ENCODE measurements at regions of chr22 and their contacts with region 1.

Region 1: GRCh38 chr22:50525390-50526068 is at the start of gene SCO2:
- DNase-seq: peak; percentile 98
- ATAC-seq: peak; percentile 62
- H3K4me3 Mint-ChIP-seq: peak within 1 kb of the TSS; percentile 97
- H3K27ac Mint-ChIP-seq: peak within 1 kb of the TSS; percentile 95
- H3K4me1 Mint-ChIP-seq: peaks cover 45% of the 10 kb centered on the region
- H3K27me3 Mint-ChIP-seq: no peaks in the 10 kb centered on the region
- total RNA-seq, gene SCO2: 11.7 to 13.9 TPM

Region 2: DNA sequence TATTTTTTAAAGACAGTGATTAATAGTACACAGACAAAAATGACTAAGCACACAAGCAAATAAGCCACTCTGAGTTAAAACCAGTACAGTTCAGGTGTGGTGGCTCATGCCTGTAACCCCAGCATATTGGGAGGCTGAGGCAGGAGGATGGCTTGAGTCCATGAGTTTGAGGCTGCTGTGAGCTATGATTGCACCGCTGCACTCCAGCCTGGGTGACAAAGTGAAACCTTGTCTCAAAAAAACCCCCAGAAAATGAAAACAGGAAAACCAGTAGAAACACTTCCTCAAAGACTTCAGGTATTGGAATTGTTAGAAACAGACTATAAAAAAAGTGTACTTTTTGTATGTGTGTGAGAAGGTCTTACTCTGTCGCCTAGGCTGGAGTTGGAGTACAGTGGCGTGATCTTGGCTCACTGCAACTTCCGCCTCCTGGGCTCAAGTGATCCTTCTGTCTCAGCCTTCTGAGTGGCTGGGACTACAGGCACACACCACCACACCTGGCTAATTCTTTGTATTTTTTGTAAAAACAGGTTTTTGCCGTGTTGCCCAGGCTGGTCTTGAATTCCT is 149.4 kb before region 1 on chr22:
- CTCF ChIA-PET with region 1: no interaction called
- POLR2A ChIA-PET with region 1: no interaction called
- DNase-seq: no peak
- ATAC-seq: no peak
- H3K4me3 Mint-ChIP-seq: no peak overlapping the region
- H3K27ac Mint-ChIP-seq: peak overlapping the region; percentile 77
- H3K4me1 Mint-ChIP-seq: peaks cover 22% of the 10 kb centered on the region
- H3K27me3 Mint-ChIP-seq: no peaks in the 10 kb centered on the region

Region 3: GRCh38 chr22:50444663-50445062 is 80.9 kb before region 1 on chr22:
- CTCF ChIA-PET with region 1: interaction called, 14 read pairs
- POLR2A ChIA-PET with region 1: interaction called, 10 read pairs
- DNase-seq: no peak
- ATAC-seq: no peak
- H3K4me3 Mint-ChIP-seq: no peak overlapping the region
- H3K27ac Mint-ChIP-seq: peak overlapping the region; percentile 89
- H3K4me1 Mint-ChIP-seq: peaks cover 25% of the 10 kb centered on the region
- H3K27me3 Mint-ChIP-seq: no peaks in the 10 kb centered on the region

Region 4: GRCh38 chr22:50469377-50470305 is 55.9 kb before region 1 on chr22:
- CTCF ChIA-PET with region 1: interaction called, 37 read pairs
- POLR2A ChIA-PET with region 1: interaction called, 11 read pairs
- DNase-seq: peak; percentile 99
- ATAC-seq: peak; percentile 75
- H3K4me3 Mint-ChIP-seq: peak overlapping the region; percentile 71
- H3K27ac Mint-ChIP-seq: peak overlapping the region; percentile 95
- H3K4me1 Mint-ChIP-seq: peaks cover 76% of the 10 kb centered on the region
- H3K27me3 Mint-ChIP-seq: no peaks in the 10 kb centered on the region

Region 5: GRCh38 chr22:50490531-50491308 is 34.8 kb before region 1 on chr22:
- CTCF ChIA-PET with region 1: no interaction called
- POLR2A ChIA-PET with region 1: no interaction called
- DNase-seq: no peak
- ATAC-seq: peak; percentile 42
- H3K4me3 Mint-ChIP-seq: peak overlapping the region; percentile 25
- H3K27ac Mint-ChIP-seq: peak overlapping the region; percentile 34
- H3K4me1 Mint-ChIP-seq: peaks cover 8% of the 10 kb centered on the region
- H3K27me3 Mint-ChIP-seq: peaks cover 2% of the 10 kb centered on the region

Region 6: DNA sequence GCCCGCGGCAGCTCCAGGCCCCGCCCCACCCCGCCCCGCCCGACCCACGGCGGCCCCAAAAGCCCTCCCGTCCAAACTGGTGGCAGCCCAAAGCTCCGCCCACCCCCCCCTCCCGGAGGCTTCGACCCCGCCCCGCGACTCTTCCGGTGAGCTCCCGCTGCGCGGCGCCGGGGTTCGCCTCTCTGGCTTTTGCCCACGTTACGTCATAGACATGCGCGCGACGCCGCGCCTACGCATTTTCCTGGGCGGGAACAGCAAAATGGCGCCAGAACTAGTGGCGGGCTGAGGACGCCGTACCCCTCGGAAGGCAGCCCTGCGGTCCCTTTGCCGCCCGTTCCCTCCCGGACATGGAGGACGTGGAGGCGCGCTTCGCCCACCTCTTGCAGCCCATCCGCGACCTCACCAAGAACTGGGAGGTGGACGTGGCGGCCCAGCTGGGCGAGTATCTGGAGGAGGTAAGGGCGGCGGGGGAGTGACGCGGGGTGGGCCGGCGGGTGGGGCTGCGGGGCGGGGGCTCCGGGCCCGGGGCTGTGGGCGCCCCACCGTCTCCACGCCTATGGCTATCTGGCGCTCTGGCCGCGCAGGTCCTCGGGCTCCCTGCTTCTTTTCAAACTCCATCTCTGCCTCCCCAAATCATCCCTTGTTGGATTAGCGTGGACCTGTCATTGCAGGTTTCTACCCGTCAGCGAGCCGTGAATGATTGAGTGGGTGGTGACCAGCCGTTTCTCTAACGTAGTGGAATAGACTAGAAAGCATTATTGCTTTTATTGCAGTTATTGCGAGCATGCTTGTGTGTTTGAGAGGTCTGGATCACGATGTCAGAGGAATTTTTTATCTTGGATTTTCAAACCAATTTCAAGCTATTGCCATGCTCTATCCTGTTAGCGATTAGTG is 17.3 kb before region 1 on chr22 and contains the start of gene NCAPH2:
- CTCF ChIA-PET with region 1: interaction called, 55 read pairs
- POLR2A ChIA-PET with region 1: interaction called, 82 read pairs
- DNase-seq: peak; percentile 98
- ATAC-seq: peak; percentile 76
- H3K4me3 Mint-ChIP-seq: peak within 1 kb of the TSS; percentile 98
- H3K27ac Mint-ChIP-seq: peak within 1 kb of the TSS; percentile 94
- H3K4me1 Mint-ChIP-seq: peaks cover 25% of the 10 kb centered on the region
- H3K27me3 Mint-ChIP-seq: no peaks in the 10 kb centered on the region
- total RNA-seq, gene NCAPH2: 146 to 150 TPM

Region 7: DNA sequence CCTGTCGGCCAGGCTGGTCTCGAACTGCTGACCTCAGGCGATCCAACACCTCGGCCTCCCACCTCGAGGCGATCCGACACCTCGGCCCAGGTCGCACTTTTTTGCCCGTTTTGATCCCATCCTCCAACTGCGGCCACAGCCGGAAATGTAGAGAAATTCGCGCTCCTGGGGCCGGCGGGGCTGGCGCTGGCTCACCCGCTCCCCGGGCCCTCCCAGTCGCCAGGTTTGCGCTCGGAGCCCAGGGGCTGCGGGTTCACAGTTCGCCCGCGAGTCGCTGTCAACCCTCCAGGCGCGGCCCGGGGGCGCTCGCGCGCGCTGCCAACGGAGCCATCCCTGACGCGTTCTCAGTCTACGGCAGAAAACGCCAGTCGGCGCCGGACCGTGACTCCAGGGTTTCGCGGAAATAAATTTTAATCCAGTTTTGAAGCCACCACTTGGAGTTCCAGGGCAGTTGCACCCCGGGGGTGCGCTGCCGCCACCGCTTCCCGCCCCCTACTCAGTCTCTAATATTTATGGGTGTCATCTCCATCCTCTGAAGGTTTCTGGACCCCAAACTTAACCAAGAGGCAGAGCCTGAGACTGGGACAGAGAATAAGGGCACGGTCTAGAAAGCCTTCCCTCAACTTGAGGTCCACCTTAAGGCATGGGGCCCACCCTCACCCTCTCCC is 18.7 kb after region 1 on chr22:
- CTCF ChIA-PET with region 1: interaction called, 116 read pairs
- POLR2A ChIA-PET with region 1: interaction called, 335 read pairs
- DNase-seq: peak; percentile 91
- ATAC-seq: peak; percentile 60
- H3K4me3 Mint-ChIP-seq: peak overlapping the region; percentile 60
- H3K27ac Mint-ChIP-seq: peak overlapping the region; percentile 86
- H3K4me1 Mint-ChIP-seq: peaks cover 61% of the 10 kb centered on the region
- H3K27me3 Mint-ChIP-seq: no peaks in the 10 kb centered on the region

Region 8: GRCh38 chr22:50576070-50576469 is 50.5 kb after region 1 on chr22:
- CTCF ChIA-PET with region 1: interaction called, 10 read pairs
- POLR2A ChIA-PET with region 1: interaction called, 31 read pairs
- DNase-seq: no peak
- ATAC-seq: no peak
- H3K4me3 Mint-ChIP-seq: no peak overlapping the region
- H3K27ac Mint-ChIP-seq: peak overlapping the region; percentile 12
- H3K4me1 Mint-ChIP-seq: peaks cover 31% of the 10 kb centered on the region
- H3K27me3 Mint-ChIP-seq: no peaks in the 10 kb centered on the region

Region 9: DNA sequence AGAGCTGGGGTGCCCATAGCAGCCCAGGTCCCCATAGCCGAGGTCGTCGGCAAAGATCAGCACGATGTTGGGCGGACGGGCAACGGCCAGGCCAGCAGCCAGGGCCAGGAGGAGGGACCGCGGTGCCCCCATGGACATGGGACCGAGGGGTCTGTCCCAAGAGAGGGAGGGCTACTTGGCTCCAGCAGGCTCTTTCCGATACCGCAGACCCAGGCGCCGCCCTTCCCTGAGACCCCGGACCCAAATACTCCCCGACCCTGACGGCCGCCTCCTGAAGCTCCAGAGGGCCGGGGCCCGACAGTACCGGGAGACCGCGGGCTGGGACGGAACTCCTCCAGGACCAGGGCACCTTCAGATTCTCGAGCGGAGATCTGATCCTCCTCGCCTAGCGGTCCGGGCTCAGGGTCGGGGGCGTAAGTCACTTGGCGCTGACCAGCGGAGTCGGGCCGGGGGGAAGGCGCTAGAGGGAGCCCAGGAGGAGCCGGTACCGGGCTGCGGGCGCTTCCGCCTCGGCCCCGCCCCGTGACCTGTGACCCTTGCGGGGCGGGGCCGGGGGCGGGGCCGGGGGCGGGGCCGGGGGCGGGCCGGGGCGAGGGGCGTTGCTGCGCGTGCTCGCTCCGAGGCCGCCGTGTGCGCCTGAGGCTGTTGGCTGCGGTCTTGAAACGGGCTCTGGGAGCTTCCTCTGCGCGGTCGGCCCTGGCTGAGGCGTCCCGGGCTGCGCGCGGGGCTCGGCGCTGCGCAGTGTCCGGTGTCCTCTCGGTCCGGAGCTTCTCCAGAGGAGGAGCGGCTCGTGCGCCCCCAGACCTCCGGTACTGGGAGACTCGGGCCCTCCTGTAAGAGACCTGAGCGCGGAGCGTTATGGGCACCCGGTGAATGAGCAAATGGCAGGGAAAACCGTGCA is 102.4 kb after region 1 on chr22 and contains the start of gene ARSA:
- CTCF ChIA-PET with region 1: interaction called, 11 read pairs
- POLR2A ChIA-PET with region 1: interaction called, 111 read pairs
- DNase-seq: peak; percentile 86
- ATAC-seq: peak; percentile 97
- H3K4me3 Mint-ChIP-seq: peak within 1 kb of the TSS; percentile 79
- H3K27ac Mint-ChIP-seq: peak within 1 kb of the TSS; percentile 81
- H3K4me1 Mint-ChIP-seq: peaks cover 25% of the 10 kb centered on the region
- H3K27me3 Mint-ChIP-seq: peaks cover 3% of the 10 kb centered on the region
- total RNA-seq, gene ARSA: 28.8 to 35.1 TPM

Measured in activated CD8-positive, alpha-beta T cell treated with anti-CD3 and anti-CD28 coated beads, Interleukin-2, amount 10 ng/mL, durations not matched to agents 7 days and 5 days (primary cell).